CD14-positive monocyte (primary cell): ENCODE measurements at regions of chr18 and their contacts with region 1.

Region 1: GRCh38 chr18:40662898-40663437 is 1292.1 kb upstream of the PIK3C3 start:
- DNase-seq: no peak
- H3K4me3 ChIP-seq: no peak overlapping the region
- H3K4me3 Mint-ChIP-seq: no peak overlapping the region
- H3K27ac ChIP-seq: no peak overlapping the region
- H3K27ac Mint-ChIP-seq: no peak overlapping the region
- H3K4me1 ChIP-seq: no peaks in the 10 kb centered on the region
- H3K4me1 Mint-ChIP-seq: no peaks in the 10 kb centered on the region
- H3K27me3 ChIP-seq: no peaks in the 10 kb centered on the region
- H3K27me3 Mint-ChIP-seq: no peaks in the 10 kb centered on the region
- CTCF ChIP-seq: no peak

Region 2: DNA sequence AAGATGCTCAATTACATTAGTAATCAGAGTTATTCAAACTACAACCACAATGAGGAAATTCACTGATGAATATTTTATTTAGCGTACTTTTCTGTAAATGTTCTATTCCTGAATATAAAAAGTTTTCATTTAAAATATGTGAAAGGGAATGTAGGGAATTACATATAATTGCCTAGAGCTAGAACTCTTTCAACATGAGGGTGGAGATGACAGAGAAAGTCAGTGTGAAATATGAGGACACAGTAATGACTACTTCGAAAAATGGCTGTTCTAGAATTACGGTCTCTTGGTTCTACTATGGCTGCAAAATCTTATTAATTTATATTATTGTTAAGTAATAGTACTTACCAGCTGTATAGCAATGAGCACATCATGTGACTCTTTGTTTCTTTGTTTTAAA is 355.3 kb before region 1 on chr18:
- intact Hi-C with region 1: no loop called
- DNase-seq: no peak
- H3K4me3 ChIP-seq: no peak overlapping the region
- H3K4me3 Mint-ChIP-seq: no peak overlapping the region
- H3K27ac ChIP-seq: no peak overlapping the region
- H3K27ac Mint-ChIP-seq: no peak overlapping the region
- H3K4me1 ChIP-seq: no peaks in the 10 kb centered on the region
- H3K4me1 Mint-ChIP-seq: no peaks in the 10 kb centered on the region
- H3K27me3 ChIP-seq: no peaks in the 10 kb centered on the region
- H3K27me3 Mint-ChIP-seq: peaks cover 0 to 2% (median 0%) of the 10 kb centered on the region in 3 donors
- CTCF ChIP-seq: no peak

Region 3: DNA sequence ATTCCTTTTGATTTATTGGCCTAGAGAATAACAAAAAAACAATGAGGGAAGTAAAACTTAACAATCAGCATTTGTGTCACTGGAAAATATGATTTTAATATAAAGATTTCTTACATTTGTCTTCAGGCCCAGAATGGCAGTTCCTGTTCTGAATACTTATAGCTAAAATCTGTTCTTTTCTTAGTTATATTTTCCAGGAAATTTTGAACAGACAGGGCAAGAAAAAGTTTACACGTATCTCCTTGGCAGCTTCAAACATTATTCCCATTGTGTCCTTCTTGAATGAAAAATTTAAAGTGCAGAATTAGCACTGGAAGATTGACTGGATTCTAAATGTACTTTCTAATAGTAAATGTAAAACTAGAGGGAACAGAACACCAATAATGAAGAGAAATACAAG is 161.9 kb before region 1 on chr18:
- intact Hi-C with region 1: no loop called
- DNase-seq: no peak
- H3K4me3 ChIP-seq: no peak overlapping the region
- H3K4me3 Mint-ChIP-seq: no peak overlapping the region
- H3K27ac ChIP-seq: no peak overlapping the region
- H3K27ac Mint-ChIP-seq: no peak overlapping the region
- H3K4me1 ChIP-seq: no peaks in the 10 kb centered on the region
- H3K4me1 Mint-ChIP-seq: no peaks in the 10 kb centered on the region
- H3K27me3 ChIP-seq: no peaks in the 10 kb centered on the region
- H3K27me3 Mint-ChIP-seq: no peaks in the 10 kb centered on the region
- CTCF ChIP-seq: no peak

Region 4: GRCh38 chr18:40624959-40625358 is 38.0 kb before region 1 on chr18:
- intact Hi-C with region 1: loop called in 1 of 2 experiments (anchors 2 kb)
- DNase-seq: no peak
- H3K4me3 ChIP-seq: no peak overlapping the region
- H3K4me3 Mint-ChIP-seq: no peak overlapping the region
- H3K27ac ChIP-seq: no peak overlapping the region
- H3K27ac Mint-ChIP-seq: no peak overlapping the region
- H3K4me1 ChIP-seq: no peaks in the 10 kb centered on the region
- H3K4me1 Mint-ChIP-seq: no peaks in the 10 kb centered on the region
- H3K27me3 ChIP-seq: no peaks in the 10 kb centered on the region
- H3K27me3 Mint-ChIP-seq: no peaks in the 10 kb centered on the region
- CTCF ChIP-seq: no peak

Region 5: GRCh38 chr18:40708726-40709125 is 45.8 kb after region 1 on chr18:
- intact Hi-C with region 1: no loop called
- DNase-seq: no peak
- H3K4me3 ChIP-seq: no peak overlapping the region
- H3K4me3 Mint-ChIP-seq: no peak overlapping the region
- H3K27ac ChIP-seq: no peak overlapping the region
- H3K27ac Mint-ChIP-seq: no peak overlapping the region
- H3K4me1 ChIP-seq: no peaks in the 10 kb centered on the region
- H3K4me1 Mint-ChIP-seq: no peaks in the 10 kb centered on the region
- H3K27me3 ChIP-seq: no peaks in the 10 kb centered on the region
- H3K27me3 Mint-ChIP-seq: no peaks in the 10 kb centered on the region
- CTCF ChIP-seq: no peak

Region 6: DNA sequence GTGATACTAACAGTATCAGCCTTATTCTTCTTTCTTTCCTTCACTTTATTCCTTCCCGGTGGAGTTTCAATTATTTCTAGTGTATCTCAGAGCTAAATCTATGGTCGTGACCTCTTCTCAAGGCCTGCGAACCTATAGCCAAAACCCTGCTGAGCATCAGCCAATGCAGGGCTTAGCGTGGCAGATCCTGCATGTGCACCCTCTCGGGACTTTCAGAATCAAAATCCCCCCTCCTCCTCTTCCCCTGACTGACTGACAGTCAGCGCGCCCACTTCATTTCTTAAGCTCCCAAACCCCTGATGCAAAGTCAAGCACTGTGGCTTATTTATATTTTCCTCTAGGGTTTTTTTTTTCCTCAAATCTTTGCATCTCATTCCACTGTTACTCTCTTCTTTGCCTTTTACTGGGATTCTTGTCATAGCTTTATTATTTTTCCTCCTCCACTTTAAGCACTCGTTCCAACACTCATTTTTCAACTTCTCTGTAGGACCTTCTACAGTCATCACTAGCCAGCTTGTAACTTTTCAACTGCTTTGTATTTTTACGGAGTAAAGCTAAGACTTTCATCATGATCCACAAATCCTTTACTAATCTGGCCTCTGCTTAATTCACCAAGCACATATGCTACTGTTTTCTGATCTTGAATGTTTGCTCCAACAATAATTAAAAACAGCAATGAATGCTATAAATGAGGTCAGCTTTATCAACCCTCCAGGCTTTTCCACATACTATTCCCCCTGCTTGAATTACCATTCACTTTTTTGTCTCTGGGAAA is 395.6 kb after region 1 on chr18:
- intact Hi-C with region 1: no loop called
- DNase-seq: no peak
- H3K4me3 ChIP-seq: no peak overlapping the region
- H3K4me3 Mint-ChIP-seq: no peak overlapping the region
- H3K27ac ChIP-seq: no peak overlapping the region
- H3K27ac Mint-ChIP-seq: no peak overlapping the region
- H3K4me1 ChIP-seq: no peaks in the 10 kb centered on the region
- H3K4me1 Mint-ChIP-seq: no peaks in the 10 kb centered on the region
- H3K27me3 ChIP-seq: no peaks in the 10 kb centered on the region
- H3K27me3 Mint-ChIP-seq: no peaks in the 10 kb centered on the region
- CTCF ChIP-seq: no peak